Activated CD4-positive, alpha-beta T cell treated with anti-CD3 and anti-CD28 coated beads, Interleukin-2, amount 10 ng/mL, durations not matched to agents 24 days and 14 days (primary cell): ENCODE measurements at regions of chr1 and their contacts with region 1.

Region 1: DNA sequence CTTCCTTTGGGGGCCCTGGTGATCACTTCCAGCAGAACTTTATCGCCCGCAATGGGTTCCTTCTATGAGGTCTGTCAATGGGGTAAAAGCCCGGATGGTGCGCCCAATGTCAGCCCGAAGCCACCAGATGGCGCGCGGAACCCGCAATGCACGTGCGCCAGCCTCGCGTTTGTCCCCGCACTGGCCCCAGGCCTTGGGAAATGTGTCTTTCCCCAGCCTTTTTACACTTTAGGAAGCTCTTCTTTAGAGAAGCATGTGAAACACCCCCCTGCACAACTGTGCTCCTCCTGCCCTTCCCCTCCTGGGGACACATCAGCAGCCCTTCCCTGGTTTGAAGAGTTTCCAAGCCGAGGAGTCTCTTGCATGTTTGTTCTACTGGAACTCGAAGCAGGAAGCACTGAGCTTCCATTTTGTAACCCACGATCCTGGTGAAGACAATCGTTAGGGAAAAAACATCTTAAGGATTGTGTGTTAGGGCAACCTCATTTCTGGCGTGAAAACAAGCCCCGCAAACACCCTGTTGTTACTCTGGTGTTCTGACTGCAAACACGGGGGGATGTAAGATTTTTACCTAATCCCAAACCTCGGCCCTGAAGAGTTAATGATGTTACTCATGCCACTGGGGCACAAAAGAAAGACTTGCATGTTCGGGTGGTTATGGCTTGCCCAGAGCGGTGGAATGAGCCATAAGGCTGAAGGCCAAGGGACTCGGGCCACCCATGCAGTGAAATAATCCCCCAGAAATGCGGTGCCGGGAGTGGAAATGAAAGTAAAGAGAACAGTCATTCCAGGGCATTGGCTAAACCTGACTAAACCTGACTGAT is 20.4 kb upstream of the TARBP1 start:
- DNase-seq: peak; percentile 96
- H3K4me3 Mint-ChIP-seq: peak overlapping the region; percentile 50
- H3K27ac Mint-ChIP-seq: peak overlapping the region; percentile 85
- H3K4me1 Mint-ChIP-seq: peaks cover 70% of the 10 kb centered on the region
- H3K27me3 Mint-ChIP-seq: no peaks in the 10 kb centered on the region

Region 2: GRCh38 chr1:234433563-234434285 is 65.6 kb before region 1 on chr1:
- intact Hi-C with region 1: no loop called
- DNase-seq: no peak
- H3K4me3 Mint-ChIP-seq: no peak overlapping the region
- H3K27ac Mint-ChIP-seq: peak overlapping the region; percentile 32
- H3K4me1 Mint-ChIP-seq: peaks cover 10% of the 10 kb centered on the region
- H3K27me3 Mint-ChIP-seq: no peaks in the 10 kb centered on the region

Region 3: GRCh38 chr1:234599617-234600417 is 100.5 kb after region 1 on chr1:
- intact Hi-C with region 1: loop called (anchors 1 kb)
- DNase-seq: peak; percentile 92
- H3K4me3 Mint-ChIP-seq: peak overlapping the region; percentile 89
- H3K27ac Mint-ChIP-seq: peak overlapping the region; percentile 97
- H3K4me1 Mint-ChIP-seq: peaks cover 47% of the 10 kb centered on the region
- H3K27me3 Mint-ChIP-seq: no peaks in the 10 kb centered on the region

Region 4: DNA sequence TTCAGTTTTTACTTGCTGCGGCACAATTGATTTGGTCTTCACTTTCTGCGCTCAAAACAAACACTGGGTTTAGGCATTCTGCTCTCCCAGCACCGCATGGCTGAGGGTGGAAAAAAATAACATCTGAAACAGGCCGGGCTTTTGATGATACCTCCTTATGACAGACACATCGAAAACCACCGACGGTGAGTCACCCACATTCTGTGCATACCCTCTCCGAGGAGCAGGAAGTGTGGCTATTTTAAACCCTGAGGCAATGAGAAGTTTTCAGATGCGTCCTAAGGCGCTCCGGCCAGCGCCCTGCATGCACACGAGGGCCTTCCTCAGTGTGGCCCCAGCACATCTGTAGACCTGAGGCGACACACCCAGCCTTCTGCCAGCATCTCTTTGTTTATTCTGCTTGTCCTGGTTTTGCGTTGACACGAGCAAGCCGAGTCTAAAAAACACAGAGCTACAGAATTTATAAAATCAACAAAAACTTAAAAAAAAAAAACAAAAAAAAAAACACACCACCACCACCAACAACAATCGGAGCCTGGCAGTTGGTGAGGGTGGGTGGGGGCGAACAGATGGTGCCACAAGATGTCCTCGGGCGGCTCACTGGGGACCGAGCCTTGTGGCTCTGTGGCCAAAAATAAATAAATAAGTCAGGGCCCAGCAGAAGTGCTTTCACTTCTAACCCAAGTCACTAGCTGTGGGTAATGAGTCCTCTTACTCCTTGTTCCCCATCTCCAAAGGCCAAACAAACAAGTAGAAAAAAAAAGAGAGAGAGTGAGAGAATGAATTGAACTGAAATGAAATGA is 273.2 kb after region 1 on chr1:
- intact Hi-C with region 1: loop called (anchors 5 kb)
- DNase-seq: peak; percentile 95
- H3K4me3 Mint-ChIP-seq: peak overlapping the region; percentile 65
- H3K27ac Mint-ChIP-seq: peak overlapping the region; percentile 95
- H3K4me1 Mint-ChIP-seq: peaks cover 54% of the 10 kb centered on the region
- H3K27me3 Mint-ChIP-seq: no peaks in the 10 kb centered on the region

Region 5: DNA sequence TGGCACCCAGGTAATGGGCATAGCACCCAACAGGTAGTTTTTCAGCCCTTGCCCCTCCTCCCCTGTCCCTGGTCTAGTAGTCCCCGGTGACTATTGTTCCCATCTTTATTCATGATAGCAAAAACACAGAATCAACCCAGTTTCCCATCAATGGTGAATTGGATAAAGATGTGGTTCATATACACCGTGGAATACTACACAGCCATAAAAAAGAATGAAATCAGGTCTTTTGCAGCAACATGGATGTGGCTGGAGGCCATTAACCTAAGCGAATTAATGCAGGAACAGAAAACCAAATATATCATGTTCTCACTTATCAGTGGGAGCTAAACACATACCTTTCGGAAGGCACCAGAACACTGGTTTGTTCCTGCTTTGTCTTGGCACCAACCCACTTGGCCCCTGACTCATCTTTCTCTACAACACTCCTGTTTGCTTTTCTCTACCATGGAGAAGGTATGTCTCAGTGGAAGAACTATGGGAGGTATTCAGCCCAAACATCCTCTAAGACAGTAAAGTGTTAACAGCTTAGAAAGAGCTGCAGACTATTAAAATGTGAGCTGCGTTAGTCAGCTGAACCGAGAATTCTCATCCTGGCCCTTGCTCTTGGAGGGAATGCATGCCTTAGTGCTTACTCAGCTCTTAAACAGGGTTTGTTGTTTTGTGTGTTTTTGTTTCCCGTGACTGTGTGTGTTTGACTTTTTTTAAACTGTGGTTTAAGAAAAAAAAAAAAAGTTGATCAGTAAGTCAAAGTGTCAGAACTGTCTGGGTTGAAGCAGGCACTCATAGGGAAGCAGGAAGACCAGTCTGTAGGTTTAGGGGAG is 426.3 kb after region 1 on chr1:
- intact Hi-C with region 1: loop called (anchors 2 kb)
- DNase-seq: peak; percentile 78
- H3K4me3 Mint-ChIP-seq: peak overlapping the region; percentile 83
- H3K27ac Mint-ChIP-seq: peak overlapping the region; percentile 95
- H3K4me1 Mint-ChIP-seq: peaks cover 59% of the 10 kb centered on the region
- H3K27me3 Mint-ChIP-seq: no peaks in the 10 kb centered on the region

Region 6: DNA sequence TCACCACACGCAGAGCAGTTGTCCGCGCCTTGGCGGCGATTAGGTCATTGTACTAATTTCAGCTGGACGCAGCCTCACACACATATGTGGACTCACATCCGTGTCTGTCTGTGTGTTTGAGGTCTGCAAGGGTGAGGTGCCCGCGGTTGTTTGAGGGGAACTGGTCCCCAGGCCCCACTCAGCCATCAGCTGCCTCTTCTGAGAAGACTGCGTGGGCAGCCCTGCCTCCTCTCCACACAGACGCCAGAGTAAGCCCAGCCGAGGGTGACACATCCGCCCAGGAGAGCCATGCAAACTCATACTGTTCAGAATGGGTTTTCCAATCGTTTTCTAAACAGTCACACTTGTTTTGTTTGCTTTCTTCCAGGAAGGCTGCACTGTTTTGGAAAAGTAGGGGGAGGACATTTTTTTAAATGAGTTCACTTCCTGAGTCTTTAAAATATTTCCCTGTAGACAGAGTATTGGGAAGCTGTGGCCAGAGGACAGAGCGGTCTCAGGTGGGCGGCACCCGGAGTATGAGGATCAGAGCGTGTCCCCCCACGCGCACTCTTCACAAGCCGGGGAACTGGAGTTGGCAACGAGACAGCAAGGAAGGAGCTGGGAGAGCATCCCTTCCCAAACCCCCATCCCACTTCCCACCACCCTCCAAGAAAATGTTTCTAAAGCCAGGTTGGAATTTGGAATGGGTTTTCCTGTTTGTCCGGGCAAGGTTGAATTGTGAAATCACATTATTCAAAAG is 576.0 kb after region 1 on chr1:
- intact Hi-C with region 1: loop called (anchors 1 kb)
- DNase-seq: peak; percentile 82
- H3K4me3 Mint-ChIP-seq: peak overlapping the region; percentile 69
- H3K27ac Mint-ChIP-seq: peak overlapping the region; percentile 100
- H3K4me1 Mint-ChIP-seq: peaks cover 31% of the 10 kb centered on the region
- H3K27me3 Mint-ChIP-seq: no peaks in the 10 kb centered on the region